HepG2 (cell line): ENCODE measurements at regions of chr22 and their contacts with region 1.

Region 1: DNA sequence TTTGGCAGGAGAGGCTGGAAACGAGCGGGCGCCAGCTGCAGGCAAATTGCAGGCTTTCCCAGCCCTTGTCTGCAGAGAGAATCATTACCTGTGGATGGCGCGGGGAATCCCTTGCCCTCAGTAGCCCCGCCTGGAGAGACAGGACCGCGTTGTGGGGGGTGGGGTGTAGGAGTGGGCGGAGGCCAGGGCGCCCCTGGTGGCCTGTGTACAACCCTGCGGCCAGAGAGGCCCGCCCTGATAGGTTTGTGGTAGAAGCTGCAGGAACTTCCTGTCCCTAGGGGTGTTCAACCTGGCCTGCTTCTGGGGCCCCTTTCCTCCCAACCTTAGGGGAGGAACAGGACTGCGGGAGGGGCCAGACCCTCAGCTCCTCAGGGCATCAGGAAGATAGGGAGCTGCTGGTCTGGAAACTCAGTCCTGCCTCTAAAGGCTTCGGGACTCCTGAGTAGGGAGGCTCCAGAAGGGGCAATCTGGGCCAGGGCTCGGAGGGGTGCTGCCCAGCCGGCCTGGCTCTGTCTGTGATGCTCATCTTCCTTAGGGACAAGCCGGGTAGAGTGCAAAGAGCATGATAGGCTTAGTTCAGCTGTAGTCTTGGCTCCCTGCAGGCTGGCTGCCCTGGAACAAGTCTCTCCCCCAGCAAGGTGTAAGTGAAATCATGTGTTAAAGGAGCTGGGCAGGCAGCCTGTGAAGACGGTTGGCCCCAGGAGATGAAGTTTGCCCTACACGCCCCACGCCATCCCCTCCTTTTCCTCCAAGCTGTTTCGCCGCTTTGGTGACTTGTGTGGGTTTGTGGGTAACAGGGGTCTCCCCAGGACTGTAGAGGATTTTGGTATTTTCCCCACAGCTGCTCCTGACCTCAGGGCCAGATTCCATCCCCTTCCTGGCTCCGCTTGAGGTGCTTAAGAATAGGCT is 24.1 kb upstream of the SUSD2 start:
- DNase-seq: peak; percentile 89
- ATAC-seq: peak; percentile 91
- H3K4me3 ChIP-seq: peak overlapping the region; percentile 50 to 75 (median 54)
- H3K27ac ChIP-seq: peak overlapping the region; percentile 48
- H3K4me1 ChIP-seq: peaks cover 40% of the 10 kb centered on the region
- H3K27me3 ChIP-seq: no peaks in the 10 kb centered on the region
- CTCF ChIP-seq: peak; percentile 89
- EP300 ChIP-seq: peak in 1 of 2 experiments; percentile 13; a peak in 1 of 4 replicates
- POLR2A ChIP-seq: no peak
- RAD21 ChIP-seq: peak; percentile 60; the same call in 1 of the 2 replicates

Region 2: GRCh38 chr22:24087071-24087795 is 69.9 kb before region 1 on chr22:
- CTCF ChIA-PET with region 1: no interaction called
- POLR2A ChIA-PET with region 1: no interaction called
- in situ Hi-C with region 1: no loop called
- intact Hi-C with region 1: no loop called
- DNase-seq: no peak
- ATAC-seq: no peak
- H3K4me3 ChIP-seq: no peak overlapping the region
- H3K27ac ChIP-seq: no peak overlapping the region
- H3K4me1 ChIP-seq: peaks cover 6% of the 10 kb centered on the region
- H3K27me3 ChIP-seq: no peaks in the 10 kb centered on the region
- CTCF ChIP-seq: no peak
- EP300 ChIP-seq: no peak
- POLR2A ChIP-seq: no peak
- RAD21 ChIP-seq: no peak

Region 3: DNA sequence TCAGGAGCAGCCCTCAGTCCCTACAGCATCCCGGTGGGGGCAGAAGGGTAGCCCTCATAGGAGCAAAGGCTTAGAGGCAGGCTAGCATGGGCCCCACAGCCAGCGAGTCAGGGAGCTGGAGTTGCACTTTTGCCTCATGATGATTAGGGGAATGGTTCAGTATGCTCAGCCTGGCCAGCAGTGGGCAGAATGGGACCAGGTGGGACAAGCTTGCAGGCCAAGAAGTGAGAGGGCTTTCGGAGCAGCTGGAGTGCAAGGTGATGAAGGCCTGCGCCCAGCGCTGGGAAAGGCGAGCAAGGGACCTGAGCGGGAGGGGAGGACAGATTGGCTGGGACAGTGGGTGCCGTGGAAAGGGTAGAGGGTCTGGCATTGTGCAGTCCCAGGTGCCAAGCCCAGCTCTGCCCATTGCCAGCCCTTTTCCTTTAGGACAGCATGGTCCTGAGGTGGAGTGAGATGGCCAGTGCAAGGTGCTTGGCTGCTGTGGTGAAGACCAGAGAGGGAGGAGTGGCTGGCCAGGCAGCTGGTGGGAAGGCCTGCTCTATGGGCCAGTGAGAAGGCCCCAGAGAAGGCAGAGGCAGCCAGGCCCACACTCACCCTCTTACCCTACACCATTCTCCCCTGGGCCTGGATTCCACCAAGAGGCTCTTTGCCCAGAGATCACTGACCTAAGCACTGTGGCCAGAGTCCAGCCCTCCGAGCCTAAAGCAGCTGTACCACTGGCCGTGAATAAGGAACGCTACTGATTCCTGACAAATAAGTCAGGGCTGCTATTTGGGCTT is 23.8 kb before region 1 on chr22:
- CTCF ChIA-PET with region 1: no interaction called
- POLR2A ChIA-PET with region 1: no interaction called
- in situ Hi-C with region 1: no loop called
- intact Hi-C with region 1: no loop called
- DNase-seq: no peak
- ATAC-seq: peak; percentile 48
- H3K4me3 ChIP-seq: no peak overlapping the region
- H3K27ac ChIP-seq: no peak overlapping the region
- H3K4me1 ChIP-seq: no peaks in the 10 kb centered on the region
- H3K27me3 ChIP-seq: no peaks in the 10 kb centered on the region
- CTCF ChIP-seq: peak; percentile 60
- EP300 ChIP-seq: no peak
- POLR2A ChIP-seq: no peak
- RAD21 ChIP-seq: 0 out of 2 replicates have a peak, but pooled peaks have one; percentile 18

Region 4: DNA sequence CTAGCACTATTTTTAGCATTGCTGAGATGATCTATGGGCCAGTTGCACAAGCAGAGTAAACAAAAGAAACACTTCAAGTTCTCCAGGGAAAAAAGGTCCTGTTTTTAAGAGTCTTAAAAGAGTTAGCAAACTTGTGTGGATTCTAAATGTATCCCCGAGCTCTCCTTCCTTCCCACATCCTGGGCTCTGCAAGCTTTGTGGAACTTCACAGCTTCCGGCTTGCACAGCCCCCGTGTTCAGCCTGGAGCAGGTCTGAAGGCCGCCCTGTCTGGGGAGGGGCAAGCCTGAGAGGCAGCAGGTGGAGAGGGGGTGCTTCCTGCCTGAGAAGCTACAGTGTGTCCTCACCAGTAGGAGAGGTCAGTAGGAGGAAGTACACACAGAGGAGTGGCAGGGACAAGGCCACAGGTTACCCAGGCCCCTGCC is 11.0 kb before region 1 on chr22:
- CTCF ChIA-PET with region 1: no interaction called
- POLR2A ChIA-PET with region 1: interaction called, 20 read pairs
- in situ Hi-C with region 1: no loop called
- intact Hi-C with region 1: no loop called
- DNase-seq: peak; percentile 80
- ATAC-seq: peak; percentile 97
- H3K4me3 ChIP-seq: peak overlapping the region in 1 of 3 experiments; percentile 22; a peak in 1 of 6 replicates
- H3K27ac ChIP-seq: peak overlapping the region; percentile 67
- H3K4me1 ChIP-seq: peaks cover 46% of the 10 kb centered on the region
- H3K27me3 ChIP-seq: no peaks in the 10 kb centered on the region; a peak in 1 of 5 replicates
- CTCF ChIP-seq: peak; percentile 38; the same call in 1 of the 2 replicates
- EP300 ChIP-seq: no peak
- POLR2A ChIP-seq: no peak
- RAD21 ChIP-seq: no peak

Region 5: GRCh38 chr22:24181996-24182899 is 25.1 kb after region 1 on chr22:
- CTCF ChIA-PET with region 1: no interaction called
- POLR2A ChIA-PET with region 1: interaction called, 10 read pairs
- in situ Hi-C with region 1: no loop called
- intact Hi-C with region 1: no loop called
- DNase-seq: peak; percentile 38
- ATAC-seq: peak; percentile 37
- H3K4me3 ChIP-seq: peak overlapping the region in 2 of 3 experiments; percentile 49 to 74; a peak in 3 of 6 replicates
- H3K27ac ChIP-seq: no peak overlapping the region
- H3K4me1 ChIP-seq: peaks cover 23% of the 10 kb centered on the region
- H3K27me3 ChIP-seq: no peaks in the 10 kb centered on the region
- CTCF ChIP-seq: peak; percentile 78
- EP300 ChIP-seq: no peak
- POLR2A ChIP-seq: no peak
- RAD21 ChIP-seq: no peak; the same call in 1 of the 2 replicates